WTC11 (cell line): ENCODE measurements at regions of chr4 and their contacts with region 1.

Region 1: DNA sequence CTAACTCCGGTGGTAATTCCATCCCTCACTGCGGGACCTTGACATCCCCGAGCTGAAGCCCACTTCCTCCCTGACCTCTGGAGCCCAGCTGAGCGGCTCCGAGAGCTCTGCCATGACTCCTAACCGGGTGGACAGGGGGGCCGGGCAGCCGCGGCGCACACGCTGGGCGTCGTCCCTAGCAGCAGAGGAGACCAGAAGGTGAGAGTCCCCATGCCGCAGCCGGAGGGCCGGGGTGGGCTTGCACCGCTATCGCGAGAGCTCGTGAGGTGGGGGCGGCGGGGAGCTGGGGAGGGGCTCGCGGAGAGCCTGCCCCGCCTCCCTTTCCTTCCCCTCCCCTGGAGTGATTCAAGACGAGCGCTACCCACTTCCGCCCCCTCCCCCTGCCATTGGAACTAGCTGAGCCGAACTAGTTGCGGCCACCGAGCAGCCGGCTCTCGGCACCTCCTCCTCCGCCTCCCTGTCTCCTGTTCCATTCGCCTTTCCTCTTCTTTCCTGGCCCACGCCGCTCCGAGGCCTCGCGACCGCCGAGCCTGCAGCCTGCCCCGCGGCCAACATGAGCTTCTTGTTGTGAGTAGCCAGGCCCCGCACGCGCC is at the start of gene MOB1B:
- DNase-seq: peak; percentile 95
- ATAC-seq: peak; percentile 94
- H3K4me3 Mint-ChIP-seq: peak within 1 kb of the TSS; percentile 98
- H3K27ac Mint-ChIP-seq: peak within 1 kb of the TSS; percentile 87
- H3K4me1 Mint-ChIP-seq: peaks cover 14% of the 10 kb centered on the region
- H3K27me3 Mint-ChIP-seq: no peaks in the 10 kb centered on the region
- CTCF ChIP-seq: no peak
- total RNA-seq, gene MOB1B: 26.1 to 28.6 TPM (median 28.0 TPM) in 3 replicates

Region 2: GRCh38 chr4:70927502-70928137 is 25.5 kb after region 1 on chr4:
- CTCF ChIA-PET with region 1: interaction called, 11 read pairs
- POLR2A ChIA-PET with region 1: no interaction called
- DNase-seq: no peak
- ATAC-seq: no peak
- H3K4me3 Mint-ChIP-seq: no peak overlapping the region
- H3K27ac Mint-ChIP-seq: peak overlapping the region; percentile 39
- H3K4me1 Mint-ChIP-seq: peaks cover 56% of the 10 kb centered on the region
- H3K27me3 Mint-ChIP-seq: no peaks in the 10 kb centered on the region
- CTCF ChIP-seq: no peak

Region 3: GRCh38 chr4:70943114-70943513 is 41.0 kb after region 1 on chr4:
- CTCF ChIA-PET with region 1: no interaction called
- POLR2A ChIA-PET with region 1: no interaction called
- DNase-seq: no peak
- ATAC-seq: no peak
- H3K4me3 Mint-ChIP-seq: no peak overlapping the region
- H3K27ac Mint-ChIP-seq: no peak overlapping the region
- H3K4me1 Mint-ChIP-seq: peaks cover 38% of the 10 kb centered on the region
- H3K27me3 Mint-ChIP-seq: no peaks in the 10 kb centered on the region
- CTCF ChIP-seq: no peak